Calu3 (cell line): ENCODE measurements at regions of chr21 and their contacts with region 1.

Region 1: GRCh38 chr21:43712308-43712974 is 6.5 kb upstream of the PDXK start:
- DNase-seq: peak; percentile 84
- H3K4me3 Mint-ChIP-seq: peak overlapping the region; percentile 60
- H3K27ac Mint-ChIP-seq: peak overlapping the region; percentile 98
- H3K4me1 Mint-ChIP-seq: peaks cover 13% of the 10 kb centered on the region
- H3K27me3 Mint-ChIP-seq: no peaks in the 10 kb centered on the region
- CTCF ChIP-seq: no peak

Region 2: DNA sequence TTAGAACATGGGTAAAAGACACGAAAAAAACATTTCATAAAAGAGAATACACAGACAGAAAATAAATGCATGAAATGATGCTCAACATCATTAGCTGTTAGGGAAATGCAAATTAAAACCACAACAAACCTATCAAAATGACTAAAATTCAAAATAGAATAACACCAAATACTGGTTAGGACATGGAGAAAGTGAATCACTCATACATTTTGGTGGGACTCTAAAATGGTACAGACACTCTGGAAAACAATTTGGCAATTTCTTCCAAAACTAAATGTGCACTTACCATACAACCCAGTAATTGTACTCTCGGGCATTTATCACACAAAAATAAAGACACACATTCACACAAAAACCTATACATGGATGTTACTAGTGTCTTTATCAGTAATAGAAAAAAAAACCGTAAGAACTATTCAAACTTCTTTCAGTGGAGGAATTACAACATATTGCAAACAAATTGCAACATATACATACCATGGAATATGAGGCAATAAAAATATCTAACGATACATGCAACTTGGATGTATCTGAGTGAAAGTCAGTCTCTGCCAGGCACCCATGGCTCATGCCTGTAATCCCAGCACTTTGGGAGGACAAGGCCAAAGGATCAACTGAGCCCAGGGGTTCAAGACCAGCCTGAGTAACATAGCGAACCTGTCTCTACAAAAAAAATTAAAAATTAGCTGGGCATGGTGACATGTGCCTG is 72.8 kb before region 1 on chr21:
- CTCF ChIA-PET with region 1: no interaction called
- intact Hi-C with region 1: no loop called
- DNase-seq: no peak
- H3K4me3 Mint-ChIP-seq: no peak overlapping the region
- H3K27ac Mint-ChIP-seq: peak overlapping the region; percentile 19
- H3K4me1 Mint-ChIP-seq: peaks cover 7% of the 10 kb centered on the region
- H3K27me3 Mint-ChIP-seq: no peaks in the 10 kb centered on the region
- CTCF ChIP-seq: no peak

Region 3: DNA sequence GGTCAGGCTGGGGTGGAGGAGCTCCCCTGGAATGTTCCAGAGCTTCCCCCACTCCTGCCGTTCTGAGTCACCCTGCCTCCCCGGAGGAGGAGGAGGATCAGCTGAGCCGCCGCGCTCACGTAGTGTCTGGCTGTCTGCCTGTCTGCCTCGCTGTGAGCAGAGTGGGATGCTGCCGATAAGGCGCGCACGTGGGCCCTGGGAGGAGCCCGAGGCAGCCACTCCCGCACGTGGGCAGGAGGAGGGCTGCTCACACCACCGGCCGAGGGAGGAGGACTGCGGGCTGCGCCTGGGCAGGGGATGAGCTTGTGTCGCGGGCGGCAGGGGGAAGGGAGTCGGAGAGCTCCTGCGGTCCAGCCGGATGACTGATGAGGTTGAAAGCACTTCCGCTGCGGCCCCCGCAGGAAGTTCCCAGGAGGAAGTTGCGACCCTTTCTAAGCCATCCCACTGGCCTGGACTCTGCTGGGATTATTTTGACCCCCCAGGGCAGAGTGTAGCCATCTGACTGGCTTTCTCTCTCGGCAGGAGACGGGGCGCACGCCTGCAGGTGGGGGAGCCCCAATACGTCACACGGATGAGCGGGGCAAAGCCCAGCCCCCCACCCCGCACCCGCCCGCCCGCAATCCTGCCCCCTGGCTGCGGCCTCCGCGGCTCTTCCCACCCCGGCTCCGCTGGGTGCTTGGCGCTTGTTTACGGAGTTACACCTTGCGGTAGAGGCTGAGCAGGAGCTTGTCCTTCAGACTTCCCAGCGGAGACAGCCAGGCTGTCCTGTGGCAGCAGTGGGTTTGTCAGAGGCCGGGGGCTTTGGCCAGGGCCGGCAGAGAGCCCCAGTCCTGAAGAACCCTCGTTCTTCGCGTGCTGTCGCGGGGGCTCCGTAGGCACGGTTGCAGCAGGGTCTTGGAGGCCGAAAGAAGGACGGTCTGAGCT is 16.3 kb after region 1 on chr21:
- CTCF ChIA-PET with region 1: interaction called, 19 read pairs
- intact Hi-C with region 1: no loop called
- DNase-seq: peak; percentile 77
- H3K4me3 Mint-ChIP-seq: peak overlapping the region; percentile 77
- H3K27ac Mint-ChIP-seq: peak overlapping the region; percentile 95
- H3K4me1 Mint-ChIP-seq: peaks cover 50% of the 10 kb centered on the region
- H3K27me3 Mint-ChIP-seq: no peaks in the 10 kb centered on the region
- CTCF ChIP-seq: no peak